ENCODE measurements at regions of chr19 and their contacts with region 1.

Region 1: DNA sequence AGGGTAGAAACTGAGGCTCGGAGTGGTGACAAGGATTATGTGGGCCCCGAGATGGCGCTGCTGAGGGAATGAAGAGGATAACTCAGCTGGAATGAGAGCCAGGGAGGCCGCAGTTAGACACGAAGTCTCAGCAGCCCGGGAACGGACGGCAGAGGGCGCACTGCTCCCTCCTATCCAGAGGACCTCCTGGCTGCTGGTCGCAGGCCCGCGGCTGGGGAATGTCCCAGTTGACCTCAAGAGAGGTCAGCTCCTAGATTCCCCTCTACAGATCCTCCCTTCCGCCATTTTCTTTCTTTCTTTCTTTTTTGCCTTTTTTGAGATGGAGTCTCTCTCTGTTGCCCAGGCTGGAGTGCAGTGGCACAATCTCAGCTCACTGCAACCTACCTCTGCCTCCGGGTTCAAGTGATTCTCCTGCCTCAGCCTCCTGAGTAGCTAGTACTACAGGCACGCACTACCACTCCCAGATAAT is 24.1 kb upstream of the ASPDH start:
- DNase-seq: peak; percentile 90
- ATAC-seq: peak; percentile 98
- H3K4me3 ChIP-seq: no peak overlapping the region
- H3K27ac ChIP-seq: no peak overlapping the region
- H3K4me1 ChIP-seq: no peaks in the 10 kb centered on the region
- H3K27me3 ChIP-seq: peaks cover 6% of the 10 kb centered on the region; the same call in 1 of the 2 replicates
- CTCF ChIP-seq: peak; percentile 98

Region 2: DNA sequence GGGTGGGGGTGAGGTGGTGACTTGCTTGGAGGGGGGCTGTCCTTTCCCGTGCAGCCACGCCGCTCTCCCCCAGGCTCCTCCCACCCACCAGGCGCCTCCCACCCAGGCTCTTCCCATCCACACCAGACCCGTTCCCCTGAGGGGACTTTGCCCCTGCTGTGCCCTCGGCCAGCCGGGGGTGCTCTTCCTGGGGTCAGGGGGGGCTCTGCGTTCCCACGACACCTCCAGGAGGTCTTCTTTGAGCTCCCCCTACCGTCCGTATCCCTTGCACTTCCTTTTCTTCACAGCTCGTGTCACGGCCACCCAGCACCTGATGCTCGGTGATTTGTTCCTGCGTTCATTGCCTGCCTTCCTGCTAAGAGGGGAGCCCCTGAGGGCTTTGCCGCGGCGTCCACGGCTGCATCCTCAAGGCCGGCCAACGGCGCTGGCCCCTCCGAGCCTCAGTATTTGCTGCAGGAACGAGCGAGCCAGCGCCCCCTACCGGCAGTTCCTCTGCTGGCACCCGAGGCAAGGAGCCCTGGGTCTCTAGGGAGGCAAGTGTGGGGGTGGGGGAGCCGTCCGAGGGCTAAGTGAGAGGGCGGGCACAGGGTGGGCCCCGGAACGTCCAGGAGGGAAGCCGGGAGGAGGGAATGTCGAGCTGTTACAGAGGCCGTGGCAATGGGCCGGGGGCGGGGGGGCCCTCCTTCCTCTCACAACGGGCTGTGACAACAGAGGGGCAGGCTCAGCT is 18.6 kb after region 1 on chr19:
- CTCF ChIA-PET with region 1: interaction called, 13 read pairs
- POLR2A ChIA-PET with region 1: no interaction called
- intact Hi-C with region 1: no loop called
- DNase-seq: peak; percentile 82
- ATAC-seq: peak; percentile 86
- H3K4me3 ChIP-seq: peak overlapping the region; percentile 76
- H3K27ac ChIP-seq: no peak overlapping the region
- H3K4me1 ChIP-seq: no peaks in the 10 kb centered on the region
- H3K27me3 ChIP-seq: peaks cover 38% of the 10 kb centered on the region
- CTCF ChIP-seq: peak; percentile 99

Region 3: GRCh38 chr19:50922317-50922853 is 384.6 kb after region 1 on chr19:
- CTCF ChIA-PET with region 1: no interaction called
- POLR2A ChIA-PET with region 1: no interaction called
- intact Hi-C with region 1: loop called (anchors 5 kb)
- DNase-seq: peak; percentile 96
- ATAC-seq: peak; percentile 100
- H3K4me3 ChIP-seq: peak overlapping the region; percentile 36; the same call in 1 of the 2 replicates
- H3K27ac ChIP-seq: no peak overlapping the region
- H3K4me1 ChIP-seq: peaks cover 26% of the 10 kb centered on the region
- H3K27me3 ChIP-seq: peaks cover 11% of the 10 kb centered on the region
- CTCF ChIP-seq: peak; percentile 98

Measured in PC-3 (cell line).